ENCODE measurements at regions of chr22 and their contacts with region 1.

Region 1: DNA sequence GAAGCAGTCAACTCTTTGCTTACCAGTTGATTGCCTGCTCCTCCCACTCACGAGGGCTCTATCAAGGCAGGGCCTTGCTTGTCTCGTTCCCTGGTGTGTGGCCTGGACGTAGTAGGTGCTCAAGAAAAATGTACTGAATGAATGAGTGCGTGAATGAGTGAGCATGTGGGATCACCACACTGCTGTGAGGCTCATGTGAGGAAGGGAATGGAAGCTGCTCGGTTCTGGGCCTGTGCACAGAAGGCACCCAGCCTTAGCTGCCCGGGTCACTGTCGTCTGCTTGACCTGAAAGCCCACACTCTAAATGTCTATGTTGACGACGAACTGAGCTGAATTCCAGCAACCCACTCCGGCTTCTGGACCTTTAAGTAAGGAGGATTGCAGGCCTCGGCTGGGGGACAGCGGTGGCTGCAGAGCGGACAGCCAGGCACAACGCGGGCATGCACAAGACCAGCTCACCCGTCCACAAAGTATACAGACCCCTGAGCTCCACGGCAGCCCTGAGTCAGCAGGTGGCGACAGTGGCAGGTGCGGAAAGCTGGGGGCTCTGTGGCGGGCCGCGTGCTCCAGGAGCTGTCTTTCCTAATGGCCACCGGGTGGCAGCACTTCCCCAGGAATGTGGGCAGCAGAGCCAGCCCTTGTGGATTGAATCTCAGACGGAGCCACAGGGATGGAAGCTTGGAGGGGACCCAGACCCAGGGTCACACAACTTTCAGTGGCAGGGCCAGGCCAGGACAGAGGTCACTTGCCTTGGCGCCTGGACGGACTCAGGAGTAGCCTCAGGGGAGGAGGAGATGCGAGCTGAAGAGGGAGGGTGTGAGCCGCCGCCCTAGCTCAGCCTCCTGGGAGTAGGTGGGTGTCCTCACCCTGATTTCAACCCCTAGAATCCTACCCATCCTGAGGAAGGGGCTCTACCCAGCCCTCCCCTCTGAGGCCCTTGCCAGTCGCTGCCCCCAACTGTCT is 5.0 kb upstream of the PICK1 start:
- DNase-seq: peak; percentile 91

Region 2: GRCh38 chr22:38104084-38104483 is 51.9 kb after region 1 on chr22:
- intact Hi-C with region 1: loop called (anchors 2 kb)
- DNase-seq: no peak

Region 3: GRCh38 chr22:38353142-38353629 is 301.0 kb after region 1 on chr22:
- intact Hi-C with region 1: loop called (anchors 5 kb)
- DNase-seq: peak; percentile 90

Region 4: DNA sequence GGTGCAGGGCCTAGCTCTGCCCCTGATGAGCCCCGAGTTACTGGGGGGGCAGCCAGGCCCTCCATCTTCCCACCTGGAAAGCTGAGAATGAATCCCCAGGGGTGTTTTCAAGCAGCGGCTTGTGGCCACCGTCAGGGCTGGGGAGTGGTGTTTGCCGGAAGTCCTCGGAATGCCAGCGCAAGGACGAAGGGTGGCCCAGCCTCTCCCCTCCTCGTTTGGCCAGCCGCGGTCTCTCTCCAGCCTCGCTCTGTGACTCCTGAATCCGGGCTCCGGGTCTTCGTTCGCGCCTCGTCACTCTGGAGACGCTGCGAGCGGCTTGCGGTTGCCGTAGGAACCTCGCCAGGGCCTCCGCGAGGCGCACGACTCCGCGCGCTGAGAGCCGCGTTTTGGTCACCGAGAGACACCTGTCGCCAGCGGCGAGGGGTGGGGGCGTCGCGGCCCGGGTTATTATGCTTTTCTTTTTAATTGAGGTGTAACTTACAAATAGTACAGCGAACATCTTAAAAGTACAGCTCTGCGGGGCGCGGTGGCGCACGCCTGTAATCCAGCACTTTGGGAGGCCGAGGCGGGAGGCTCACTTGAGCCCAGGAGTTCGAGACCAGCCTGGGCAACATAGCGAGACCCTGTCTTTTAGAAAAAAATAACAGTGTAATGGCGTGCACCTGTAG is 409.4 kb after region 1 on chr22:
- intact Hi-C with region 1: loop called (anchors 10 kb)
- DNase-seq: peak; percentile 91

Region 5: DNA sequence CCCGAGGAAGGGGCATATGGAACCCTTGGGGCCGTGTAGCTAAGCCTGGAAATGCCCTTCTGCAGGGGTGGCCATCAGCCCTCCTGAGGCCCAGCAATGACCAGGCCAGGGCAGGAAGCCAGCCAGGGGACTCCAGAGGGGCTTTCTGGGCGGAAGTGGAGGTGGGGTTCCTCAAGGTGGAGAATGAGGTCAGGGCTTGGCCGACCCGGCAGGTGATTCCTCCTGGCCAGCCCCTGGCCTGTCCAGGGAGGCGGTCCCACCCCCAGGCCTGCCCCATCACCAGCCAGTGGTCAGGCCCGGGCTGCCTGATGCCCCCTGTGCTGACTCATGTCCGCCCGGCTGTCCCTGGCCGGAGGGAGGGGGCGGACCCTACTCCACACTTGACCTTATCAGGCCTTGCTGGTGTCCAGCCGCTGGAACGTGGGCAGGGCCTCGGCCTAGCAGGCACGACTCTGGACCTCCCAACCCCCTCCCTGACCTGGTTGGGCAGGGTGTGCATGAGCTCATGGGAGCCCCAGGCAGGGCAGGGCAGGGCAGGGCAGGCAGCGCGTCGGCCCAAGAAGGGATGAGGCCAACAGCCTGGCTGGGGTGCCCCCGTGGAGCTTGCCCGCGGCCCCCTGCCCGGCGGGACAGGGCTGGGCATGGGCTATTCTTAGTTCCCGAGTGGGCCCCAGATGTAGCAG is 1231.3 kb after region 1 on chr22:
- intact Hi-C with region 1: no loop called
- DNase-seq: no peak

Measured in cardiac septum (tissue), 1 donor.